Activated CD4-positive, alpha-beta memory T cell treated with anti-CD3 and anti-CD28 coated beads for 36 hours (primary cell): ENCODE measurements at regions of chr5 and their contacts with region 1.

Region 1: DNA sequence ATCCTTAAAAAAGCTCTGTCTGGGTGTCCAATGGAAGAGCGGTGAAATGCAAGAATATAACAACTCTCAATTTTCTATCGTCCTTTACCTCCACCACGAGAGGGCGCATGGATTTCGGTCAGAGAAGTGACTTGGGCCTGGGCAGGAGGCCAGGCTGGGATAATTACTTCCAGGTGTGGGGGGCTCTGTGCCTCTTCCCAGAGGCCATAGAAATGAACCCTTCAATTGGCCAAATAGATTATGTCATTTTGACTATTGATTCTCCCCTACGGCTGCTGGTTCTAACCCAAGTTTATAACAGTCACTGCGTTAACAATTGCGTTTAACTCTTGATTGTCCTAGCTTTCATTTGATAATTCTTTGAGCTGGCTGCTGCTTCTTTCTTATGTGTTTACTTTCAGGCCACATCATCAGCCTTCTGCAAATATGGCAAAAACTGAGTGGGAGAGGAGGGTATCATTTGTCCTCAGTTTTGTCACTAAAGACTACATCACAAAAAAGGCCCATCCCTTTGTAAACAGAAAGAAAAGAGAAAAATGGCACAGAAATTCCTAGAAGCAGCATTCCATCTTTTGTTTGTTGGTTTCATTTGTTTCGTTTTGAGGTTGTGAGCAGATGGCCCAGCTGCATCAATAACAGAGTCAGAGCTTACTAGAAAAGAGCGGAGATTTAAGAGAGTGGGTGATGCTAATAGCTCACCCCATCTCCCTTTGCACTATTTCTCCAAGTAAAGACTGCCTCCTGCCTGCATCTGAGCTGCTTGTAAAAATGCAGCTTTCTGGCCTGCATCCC is 45.4 kb upstream of the ZFR start:
- DNase-seq: peak; percentile 77
- H3K4me3 Mint-ChIP-seq: no peak overlapping the region
- H3K27ac Mint-ChIP-seq: no peak overlapping the region
- H3K4me1 Mint-ChIP-seq: no peaks in the 10 kb centered on the region
- H3K27me3 Mint-ChIP-seq: no peaks in the 10 kb centered on the region

Region 2: GRCh38 chr5:32504989-32505596 is 15.1 kb after region 1 on chr5:
- CTCF ChIA-PET with region 1: interaction called, 37 read pairs
- POLR2A ChIA-PET with region 1: no interaction called
- intact Hi-C with region 1: no loop called
- DNase-seq: no peak
- H3K4me3 Mint-ChIP-seq: no peak overlapping the region
- H3K27ac Mint-ChIP-seq: no peak overlapping the region
- H3K4me1 Mint-ChIP-seq: peaks cover 14% of the 10 kb centered on the region
- H3K27me3 Mint-ChIP-seq: no peaks in the 10 kb centered on the region

Region 3: GRCh38 chr5:32511776-32512374 is 21.9 kb after region 1 on chr5:
- CTCF ChIA-PET with region 1: interaction called, 14 read pairs
- POLR2A ChIA-PET with region 1: no interaction called
- intact Hi-C with region 1: no loop called
- DNase-seq: no peak
- H3K4me3 Mint-ChIP-seq: no peak overlapping the region
- H3K27ac Mint-ChIP-seq: no peak overlapping the region
- H3K4me1 Mint-ChIP-seq: no peaks in the 10 kb centered on the region
- H3K27me3 Mint-ChIP-seq: no peaks in the 10 kb centered on the region

Region 4: GRCh38 chr5:32531885-32532520 is 42.0 kb after region 1 on chr5:
- CTCF ChIA-PET with region 1: interaction called, 18 read pairs
- POLR2A ChIA-PET with region 1: no interaction called
- intact Hi-C with region 1: no loop called
- DNase-seq: peak; percentile 81
- H3K4me3 Mint-ChIP-seq: peak overlapping the region; percentile 91
- H3K27ac Mint-ChIP-seq: peak overlapping the region; percentile 99
- H3K4me1 Mint-ChIP-seq: peaks cover 56% of the 10 kb centered on the region
- H3K27me3 Mint-ChIP-seq: no peaks in the 10 kb centered on the region

Region 5: DNA sequence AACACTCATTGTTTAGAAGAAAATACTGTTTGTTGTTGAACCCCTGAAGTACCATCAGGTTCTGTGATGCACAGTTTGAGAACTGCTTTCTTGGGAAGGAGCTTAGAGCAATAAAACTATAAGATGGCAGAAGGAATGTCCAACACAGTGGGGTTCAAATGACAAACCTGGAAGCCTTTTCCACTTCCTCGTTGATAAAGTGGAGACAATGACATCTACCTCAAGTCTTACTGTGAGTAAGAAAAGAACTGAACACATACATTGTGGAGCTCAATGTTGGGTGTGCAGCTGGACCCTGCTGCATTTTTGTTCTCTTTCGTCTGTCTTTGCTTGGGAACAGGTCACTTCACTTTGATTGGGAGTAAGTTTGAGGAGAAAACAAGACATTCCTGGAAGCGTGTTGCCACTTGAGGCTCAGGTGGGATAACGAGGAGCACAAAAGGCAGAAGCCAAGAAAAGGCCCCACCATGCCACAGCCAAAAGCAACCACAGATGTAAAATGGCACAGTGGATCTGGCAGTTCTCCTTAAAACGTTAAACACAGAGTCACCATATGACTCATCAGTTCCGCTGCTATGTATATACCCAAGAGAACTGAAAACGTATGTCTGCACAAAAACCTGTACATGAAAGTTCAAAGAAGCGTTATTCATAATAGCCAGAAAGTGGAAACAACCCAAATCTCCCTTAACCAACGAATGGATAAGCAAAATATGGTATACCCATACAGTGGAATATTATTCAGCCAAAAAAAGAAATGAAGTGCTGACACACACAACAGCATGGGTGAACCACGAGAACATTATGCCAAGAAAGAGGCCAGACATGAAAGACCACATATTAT is 52.5 kb after region 1 on chr5:
- CTCF ChIA-PET with region 1: interaction called, 5 read pairs
- POLR2A ChIA-PET with region 1: no interaction called
- intact Hi-C with region 1: loop called (anchors 5 kb)
- DNase-seq: peak; percentile 65
- H3K4me3 Mint-ChIP-seq: peak overlapping the region; percentile 36
- H3K27ac Mint-ChIP-seq: peak overlapping the region; percentile 94
- H3K4me1 Mint-ChIP-seq: peaks cover 57% of the 10 kb centered on the region
- H3K27me3 Mint-ChIP-seq: no peaks in the 10 kb centered on the region

Region 6: DNA sequence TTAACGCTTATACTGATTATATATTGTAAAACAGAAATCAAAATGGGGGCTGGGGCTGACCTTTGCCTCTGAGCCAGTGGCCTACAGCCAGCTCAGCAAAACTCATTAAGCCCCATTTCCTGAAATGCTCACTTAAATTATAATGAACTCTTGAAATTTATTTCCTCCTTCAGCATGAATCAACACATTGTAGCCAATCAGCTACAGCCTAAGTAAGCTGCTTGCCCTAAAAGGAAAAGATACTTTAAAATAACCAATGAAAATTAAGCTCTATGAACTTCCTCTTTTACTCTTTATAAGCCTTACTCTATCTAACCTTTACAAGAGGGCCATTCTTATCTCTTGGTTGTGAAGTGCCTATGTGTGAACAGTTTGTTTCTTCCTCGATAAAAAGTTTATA is 61.9 kb after region 1 on chr5:
- CTCF ChIA-PET with region 1: interaction called, 12 read pairs
- POLR2A ChIA-PET with region 1: no interaction called
- intact Hi-C with region 1: no loop called
- DNase-seq: no peak
- H3K4me3 Mint-ChIP-seq: no peak overlapping the region
- H3K27ac Mint-ChIP-seq: no peak overlapping the region
- H3K4me1 Mint-ChIP-seq: peaks cover 5% of the 10 kb centered on the region
- H3K27me3 Mint-ChIP-seq: no peaks in the 10 kb centered on the region

Region 7: GRCh38 chr5:32613050-32613672 is 123.2 kb after region 1 on chr5:
- CTCF ChIA-PET with region 1: interaction called, 86 read pairs
- POLR2A ChIA-PET with region 1: no interaction called
- intact Hi-C with region 1: loop called (anchors 1 kb)
- DNase-seq: peak; percentile 90
- H3K4me3 Mint-ChIP-seq: no peak overlapping the region
- H3K27ac Mint-ChIP-seq: no peak overlapping the region
- H3K4me1 Mint-ChIP-seq: peaks cover 4% of the 10 kb centered on the region
- H3K27me3 Mint-ChIP-seq: no peaks in the 10 kb centered on the region

Region 8: DNA sequence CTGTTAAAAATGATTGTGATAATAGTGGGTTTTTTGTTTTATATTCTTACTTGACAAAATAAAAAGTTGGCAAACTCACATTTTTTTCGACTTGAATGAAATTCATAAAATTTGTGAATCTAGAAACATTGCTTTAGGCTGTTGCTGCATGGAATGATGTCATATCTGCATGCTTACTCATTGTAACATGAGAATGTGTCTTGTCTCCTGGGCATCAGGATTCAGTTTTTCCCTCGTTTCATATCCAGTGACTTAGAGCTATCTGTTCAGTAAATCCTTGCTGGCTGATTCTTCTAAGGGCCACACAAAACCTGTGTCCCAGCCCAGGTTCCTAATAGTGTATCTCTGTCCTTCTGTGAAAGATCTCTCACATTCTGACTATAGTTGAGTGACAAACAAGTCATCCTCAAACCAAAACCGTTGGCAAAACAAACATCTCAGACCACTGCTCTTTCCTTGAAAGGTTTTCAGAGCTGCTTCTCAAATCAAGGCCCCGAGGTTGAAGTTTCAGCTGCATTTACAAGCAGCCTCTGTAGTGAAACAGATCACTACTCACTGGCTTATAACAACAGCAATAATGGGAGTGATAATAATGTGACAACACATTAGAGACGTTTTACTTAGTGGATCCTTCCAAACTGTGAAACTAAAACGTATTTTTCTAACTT is 316.1 kb after region 1 on chr5:
- CTCF ChIA-PET with region 1: no interaction called
- POLR2A ChIA-PET with region 1: no interaction called
- intact Hi-C with region 1: no loop called
- DNase-seq: no peak
- H3K4me3 Mint-ChIP-seq: no peak overlapping the region
- H3K27ac Mint-ChIP-seq: no peak overlapping the region
- H3K4me1 Mint-ChIP-seq: no peaks in the 10 kb centered on the region
- H3K27me3 Mint-ChIP-seq: no peaks in the 10 kb centered on the region